MCF 10A (cell line): ENCODE measurements at regions of chr6 and their contacts with region 1.

Region 1: GRCh38 chr6:73129653-73130443 is 95.4 kb downstream of the KHDC1L start:
- DNase-seq: peak; percentile 81
- H3K4me3 Mint-ChIP-seq: no peak overlapping the region
- H3K27ac Mint-ChIP-seq: peak overlapping the region; percentile 25
- H3K4me1 Mint-ChIP-seq: no peaks in the 10 kb centered on the region
- H3K27me3 Mint-ChIP-seq: no peaks in the 10 kb centered on the region
- CTCF ChIP-seq: peak; percentile 95

Region 2: GRCh38 chr6:72643214-72643613 is 486.6 kb before region 1 on chr6:
- CTCF ChIA-PET with region 1: interaction called, 7 read pairs
- POLR2A ChIA-PET with region 1: no interaction called
- intact Hi-C with region 1: loop called (anchors 1 kb)
- DNase-seq: no peak
- H3K4me3 Mint-ChIP-seq: no peak overlapping the region
- H3K27ac Mint-ChIP-seq: no peak overlapping the region
- H3K4me1 Mint-ChIP-seq: peaks cover 6% of the 10 kb centered on the region
- H3K27me3 Mint-ChIP-seq: no peaks in the 10 kb centered on the region
- CTCF ChIP-seq: peak; percentile 31

Region 3: GRCh38 chr6:72748759-72749158 is 381.1 kb before region 1 on chr6:
- CTCF ChIA-PET with region 1: no interaction called
- POLR2A ChIA-PET with region 1: no interaction called
- intact Hi-C with region 1: loop called (anchors 5 kb)
- DNase-seq: peak; percentile 92
- H3K4me3 Mint-ChIP-seq: no peak overlapping the region
- H3K27ac Mint-ChIP-seq: no peak overlapping the region
- H3K4me1 Mint-ChIP-seq: peaks cover 32% of the 10 kb centered on the region
- H3K27me3 Mint-ChIP-seq: no peaks in the 10 kb centered on the region
- CTCF ChIP-seq: no peak

Region 4: DNA sequence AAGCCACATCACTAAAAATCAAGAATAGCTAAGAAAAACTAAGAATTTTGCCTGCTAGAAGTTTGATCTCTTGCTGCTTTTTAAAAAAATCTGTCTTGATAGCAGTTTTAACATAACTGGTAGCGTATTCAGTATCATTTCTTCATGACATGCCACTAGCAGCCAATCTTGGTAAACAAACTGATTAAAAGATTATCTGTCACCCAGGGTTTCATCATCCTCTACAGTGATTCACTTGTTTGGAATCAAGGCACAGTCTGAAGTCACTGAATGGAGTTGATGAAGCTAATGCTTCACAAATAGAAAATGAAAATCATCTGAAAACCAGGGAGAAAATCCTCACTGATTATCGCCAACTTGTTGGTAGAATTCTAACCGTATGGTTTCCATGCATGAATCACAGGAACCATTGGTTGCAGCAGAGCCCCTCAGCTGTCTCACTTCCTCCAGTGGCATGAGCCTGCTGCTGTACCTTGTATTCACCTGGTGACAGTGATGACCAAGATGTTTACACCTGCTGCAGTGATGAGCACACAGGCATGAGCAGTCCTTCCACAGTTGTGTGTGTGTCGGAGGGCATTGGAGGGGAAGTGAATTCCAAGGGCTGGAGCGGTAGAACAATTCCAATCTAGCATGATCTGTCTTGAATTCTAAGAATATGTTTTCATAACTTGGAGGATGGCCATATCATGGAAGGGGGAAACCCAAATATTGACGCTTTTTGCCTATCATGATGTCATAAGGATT is 179.6 kb before region 1 on chr6:
- CTCF ChIA-PET with region 1: interaction called, 7 read pairs
- POLR2A ChIA-PET with region 1: no interaction called
- intact Hi-C with region 1: loop called (anchors 10 kb)
- DNase-seq: peak; percentile 62
- H3K4me3 Mint-ChIP-seq: no peak overlapping the region
- H3K27ac Mint-ChIP-seq: peak overlapping the region; percentile 65
- H3K4me1 Mint-ChIP-seq: peaks cover 36% of the 10 kb centered on the region
- H3K27me3 Mint-ChIP-seq: no peaks in the 10 kb centered on the region
- CTCF ChIP-seq: no peak

Region 5: GRCh38 chr6:73180763-73181619 is 51.1 kb after region 1 on chr6:
- CTCF ChIA-PET with region 1: interaction called, 9 read pairs
- POLR2A ChIA-PET with region 1: no interaction called
- intact Hi-C with region 1: loop called (anchors 1 kb)
- DNase-seq: peak; percentile 70
- H3K4me3 Mint-ChIP-seq: peak overlapping the region; percentile 51
- H3K27ac Mint-ChIP-seq: no peak overlapping the region
- H3K4me1 Mint-ChIP-seq: no peaks in the 10 kb centered on the region
- H3K27me3 Mint-ChIP-seq: no peaks in the 10 kb centered on the region
- CTCF ChIP-seq: peak; percentile 81

Region 6: GRCh38 chr6:73325656-73326055 is 195.8 kb after region 1 on chr6:
- CTCF ChIA-PET with region 1: no interaction called
- POLR2A ChIA-PET with region 1: no interaction called
- intact Hi-C with region 1: no loop called
- DNase-seq: no peak
- H3K4me3 Mint-ChIP-seq: no peak overlapping the region
- H3K27ac Mint-ChIP-seq: no peak overlapping the region
- H3K4me1 Mint-ChIP-seq: peaks cover 5% of the 10 kb centered on the region
- H3K27me3 Mint-ChIP-seq: no peaks in the 10 kb centered on the region
- CTCF ChIP-seq: no peak